AG04450 (cell line): ENCODE measurements at regions of chr6 and their contacts with region 1.

Region 1: DNA sequence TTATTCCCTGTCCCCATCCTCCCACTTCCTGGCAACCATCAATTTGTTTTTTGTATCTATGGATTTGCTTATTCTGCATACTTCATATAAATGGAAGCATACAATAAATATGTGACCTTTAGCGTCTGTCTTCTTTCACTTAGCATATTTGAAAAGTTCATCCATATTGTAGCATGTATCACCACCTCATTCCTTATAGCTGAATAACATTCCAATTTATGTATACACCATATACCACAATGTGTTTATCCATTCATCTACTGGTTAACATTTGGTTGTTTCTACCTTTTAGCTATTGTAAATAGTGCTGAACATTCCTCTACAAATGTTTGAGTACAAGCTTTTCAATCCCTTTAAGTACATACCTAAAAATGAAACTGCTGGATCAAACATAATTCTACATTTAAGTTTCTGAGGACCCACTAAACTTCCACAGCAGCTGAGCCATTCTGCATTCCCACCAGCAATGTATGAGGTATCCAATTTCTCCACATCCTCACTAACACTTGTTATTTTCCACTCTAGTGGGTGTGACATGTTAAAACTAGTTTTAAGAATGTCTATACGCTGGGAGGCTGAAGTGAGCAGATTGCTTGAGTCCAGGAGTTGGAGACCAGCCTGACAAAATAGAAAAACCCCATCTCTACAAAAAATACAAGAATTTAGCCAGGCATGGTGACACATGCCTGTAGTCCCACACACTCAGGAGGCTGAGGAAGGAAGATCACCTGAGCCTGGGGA is 32.9 kb downstream of the NUDT3 start:
- DNase-seq: no peak
- H3K4me3 ChIP-seq: peak overlapping the region; percentile 23; the same call in 1 of the 2 replicates
- H3K27ac ChIP-seq: peak overlapping the region; percentile 83
- H3K27me3 ChIP-seq: no peaks in the 10 kb centered on the region
- CTCF ChIP-seq: no peak

Region 2: GRCh38 chr6:33271458-33272274 is 1087.9 kb before region 1 on chr6 and contains the starts of genes RPS18 and VPS52:
- CTCF ChIA-PET with region 1: no interaction called
- POLR2A ChIA-PET with region 1: no interaction called
- DNase-seq: peak; percentile 98
- H3K4me3 ChIP-seq: peak within 1 kb of the TSS; percentile 94
- H3K27ac ChIP-seq: peak within 1 kb of the TSS; percentile 94
- H3K27me3 ChIP-seq: no peaks in the 10 kb centered on the region
- CTCF ChIP-seq: no peak
- polyA plus RNA-seq, gene RPS18: 5,380 and 5,823 TPM in 2 replicates
- polyA plus RNA-seq, gene VPS52: 58.0 and 60.4 TPM in 2 replicates

Region 3: DNA sequence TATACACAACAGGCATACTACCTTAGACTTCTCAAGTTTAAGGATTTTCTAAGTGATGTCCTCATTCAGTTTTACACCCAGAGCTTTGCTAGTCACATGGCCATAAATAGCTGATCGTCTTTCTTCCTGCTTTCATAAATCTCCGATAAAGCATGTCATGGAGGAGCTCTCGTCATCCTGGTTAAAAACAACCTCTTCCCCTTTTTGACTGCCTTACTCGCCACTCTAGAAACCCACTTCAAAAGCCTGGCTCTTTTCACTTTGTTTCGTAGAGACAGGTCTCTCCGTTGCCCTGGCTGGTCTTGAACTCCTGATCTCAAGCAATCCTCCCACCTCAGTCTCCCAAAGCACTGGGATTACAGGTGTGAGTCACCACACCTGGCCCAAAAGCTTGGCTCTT is 43.8 kb before region 1 on chr6:
- CTCF ChIA-PET with region 1: no interaction called
- POLR2A ChIA-PET with region 1: no interaction called
- DNase-seq: no peak
- H3K4me3 ChIP-seq: no peak overlapping the region
- H3K27ac ChIP-seq: no peak overlapping the region
- H3K27me3 ChIP-seq: no peaks in the 10 kb centered on the region
- CTCF ChIP-seq: no peak

Region 4: DNA sequence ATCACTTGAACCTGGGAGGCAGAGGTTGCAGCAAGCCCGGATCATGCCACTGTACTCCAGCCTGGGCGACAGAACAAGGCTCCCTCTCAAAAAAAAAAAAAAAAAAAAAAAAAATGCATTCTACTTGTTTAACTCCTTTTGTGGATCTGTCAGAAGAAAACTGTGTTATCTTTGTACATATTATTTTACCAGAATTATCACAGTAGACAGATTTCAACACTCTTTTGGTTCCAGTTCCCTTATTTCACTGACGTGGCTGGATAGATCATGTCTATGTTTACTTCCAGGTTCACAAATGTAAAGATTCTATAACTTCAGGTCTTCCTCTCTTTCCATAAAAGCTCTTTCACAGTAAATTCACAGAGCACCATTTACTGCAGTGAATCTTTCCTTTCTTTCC is 14.5 kb after region 1 on chr6:
- CTCF ChIA-PET with region 1: no interaction called
- POLR2A ChIA-PET with region 1: no interaction called
- DNase-seq: no peak
- H3K4me3 ChIP-seq: no peak overlapping the region
- H3K27ac ChIP-seq: no peak overlapping the region
- H3K27me3 ChIP-seq: no peaks in the 10 kb centered on the region
- CTCF ChIP-seq: no peak

Region 5: DNA sequence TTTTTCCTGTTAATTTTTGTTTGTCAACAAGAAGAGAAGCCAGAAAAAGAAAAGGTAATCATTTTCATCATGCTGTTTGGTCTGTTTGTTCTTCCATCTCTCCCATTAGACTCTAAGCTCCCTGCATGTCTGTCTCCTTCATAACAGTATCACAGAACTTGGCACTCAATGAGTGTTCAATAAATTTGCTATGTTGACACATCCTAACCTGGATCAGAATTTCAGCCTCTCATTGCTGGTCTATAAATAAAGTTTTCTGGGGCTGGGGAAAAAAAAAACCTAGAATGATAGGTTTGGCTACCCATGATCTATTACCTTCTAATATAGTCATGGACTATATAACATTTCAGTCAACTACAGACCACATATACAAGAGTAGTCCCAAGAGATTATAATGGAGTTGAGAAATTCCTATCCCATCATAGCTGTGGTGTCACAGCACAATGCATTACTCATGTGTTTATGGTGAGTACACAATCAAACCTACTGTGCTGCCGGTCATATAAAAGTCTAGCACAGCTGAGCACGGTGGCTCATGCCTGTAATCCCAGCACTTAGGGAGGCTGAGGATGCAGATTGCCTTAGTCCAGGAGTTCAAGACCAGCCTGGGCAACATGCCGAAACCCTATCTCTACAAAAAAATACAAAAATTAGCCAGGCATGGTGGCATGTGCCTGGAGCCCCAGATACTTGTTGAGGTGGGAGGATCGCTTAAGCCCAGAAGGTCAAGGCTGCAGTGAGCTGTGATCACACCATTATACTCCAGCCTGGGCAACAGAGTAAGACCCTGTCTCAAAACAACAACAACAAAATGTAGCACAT is 26.9 kb after region 1 on chr6:
- CTCF ChIA-PET with region 1: interaction called, 6 read pairs
- POLR2A ChIA-PET with region 1: interaction called, 14 read pairs
- DNase-seq: peak; percentile 70
- H3K4me3 ChIP-seq: no peak overlapping the region
- H3K27ac ChIP-seq: no peak overlapping the region
- H3K27me3 ChIP-seq: no peaks in the 10 kb centered on the region
- CTCF ChIP-seq: no peak